ENCODE measurements at regions of chr4 and their contacts with region 1.

Region 1: GRCh38 chr4:118981839-118982381 is 93.3 kb downstream of the SYNPO2 start:
- DNase-seq: peak; percentile 52 to 70
- H3K4me3 ChIP-seq: no peak overlapping the region
- H3K4me3 Mint-ChIP-seq: no peak overlapping the region
- H3K27ac Mint-ChIP-seq: no peak overlapping the region
- H3K4me1 ChIP-seq: no peaks in the 10 kb centered on the region
- H3K4me1 Mint-ChIP-seq: no peaks in the 10 kb centered on the region
- H3K27me3 ChIP-seq: no peaks in the 10 kb centered on the region
- H3K27me3 Mint-ChIP-seq: no peaks in the 10 kb centered on the region
- CTCF ChIP-seq: peak; percentile 62 to 75

Region 2: GRCh38 chr4:119041951-119042560 is 60.1 kb after region 1 on chr4:
- CTCF ChIA-PET with region 1: no interaction called
- POLR2A ChIA-PET with region 1: no interaction called
- intact Hi-C with region 1: loop called (anchors 1 kb)
- DNase-seq: peak; percentile 72 to 78
- H3K4me3 ChIP-seq: no peak overlapping the region
- H3K4me3 Mint-ChIP-seq: no peak overlapping the region
- H3K27ac Mint-ChIP-seq: no peak overlapping the region
- H3K4me1 ChIP-seq: peaks cover 10% of the 10 kb centered on the region
- H3K4me1 Mint-ChIP-seq: peaks cover 20% of the 10 kb centered on the region
- H3K27me3 ChIP-seq: no peaks in the 10 kb centered on the region
- H3K27me3 Mint-ChIP-seq: no peaks in the 10 kb centered on the region
- CTCF ChIP-seq: peak; percentile 62 to 77

Region 3: DNA sequence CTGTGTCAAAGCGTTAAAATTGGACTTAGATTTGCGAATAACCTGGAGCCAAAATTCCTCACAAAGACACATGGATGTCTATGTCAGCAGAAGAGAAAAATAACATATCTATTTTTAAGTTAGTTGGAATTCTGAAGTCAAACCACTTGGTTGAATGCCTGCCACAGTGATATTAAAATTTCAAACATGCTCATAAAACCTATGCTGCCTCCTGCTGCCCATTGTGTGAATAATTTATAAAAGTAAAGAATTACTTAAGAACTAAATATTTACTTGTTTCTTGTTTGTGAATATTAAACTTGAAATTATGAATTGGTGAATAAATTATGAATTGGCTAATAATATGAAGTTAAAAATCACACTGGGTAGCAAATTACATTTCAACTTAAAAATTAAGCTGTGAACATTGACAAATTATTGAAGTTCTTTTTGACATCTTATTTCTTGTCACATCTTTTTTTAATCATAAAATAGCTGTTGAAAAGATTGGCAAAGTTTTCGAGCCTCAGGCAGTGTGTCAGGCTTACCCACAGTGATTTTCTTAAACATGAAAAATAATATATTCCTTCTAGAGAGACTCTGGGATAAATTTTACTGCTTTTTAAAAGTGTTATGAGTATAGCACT is 304.6 kb after region 1 on chr4:
- CTCF ChIA-PET with region 1: no interaction called
- POLR2A ChIA-PET with region 1: no interaction called
- intact Hi-C with region 1: loop called (anchors 1 kb)
- DNase-seq: no peak
- H3K4me3 ChIP-seq: no peak overlapping the region
- H3K4me3 Mint-ChIP-seq: no peak overlapping the region
- H3K27ac Mint-ChIP-seq: no peak overlapping the region
- H3K4me1 ChIP-seq: peaks cover 10% of the 10 kb centered on the region
- H3K4me1 Mint-ChIP-seq: peaks cover 19% of the 10 kb centered on the region
- H3K27me3 ChIP-seq: no peaks in the 10 kb centered on the region
- H3K27me3 Mint-ChIP-seq: no peaks in the 10 kb centered on the region
- CTCF ChIP-seq: peak; percentile 34 to 52

Region 4: GRCh38 chr4:119490335-119490734 is 508.4 kb after region 1 on chr4:
- CTCF ChIA-PET with region 1: no interaction called
- POLR2A ChIA-PET with region 1: no interaction called
- intact Hi-C with region 1: loop called (anchors 1 kb)
- DNase-seq: peak in 1 of 2 experiments; percentile 25
- H3K4me3 ChIP-seq: no peak overlapping the region
- H3K4me3 Mint-ChIP-seq: no peak overlapping the region
- H3K27ac Mint-ChIP-seq: no peak overlapping the region
- H3K4me1 ChIP-seq: no peaks in the 10 kb centered on the region
- H3K4me1 Mint-ChIP-seq: no peaks in the 10 kb centered on the region
- H3K27me3 ChIP-seq: no peaks in the 10 kb centered on the region
- H3K27me3 Mint-ChIP-seq: no peaks in the 10 kb centered on the region
- CTCF ChIP-seq: peak in 1 of 2 experiments; percentile 47

Measured in Caco-2 (cell line).